Transverse colon (tissue), 4 donors: ENCODE measurements at regions of chr2 and their contacts with region 1.

Region 1: GRCh38 chr2:168118733-168119514 is 128.5 kb downstream of the STK39 start:
- DNase-seq: no peak
- H3K4me3 ChIP-seq: no peak overlapping the region
- H3K27ac ChIP-seq: no peak overlapping the region
- H3K4me1 ChIP-seq: peaks cover 0 to 10% (median 3%) of the 10 kb centered on the region in 4 donors
- H3K27me3 ChIP-seq: no peaks in the 10 kb centered on the region
- CTCF ChIP-seq: peak; percentile 59 to 72 (median 63)
- EP300 ChIP-seq: no peak
- POLR2A ChIP-seq: no peak

Region 2: GRCh38 chr2:166539340-166540162 is 1579.4 kb before region 1 on chr2:
- in situ Hi-C with region 1: loop called in 3 of 4 experiments (anchors 25 kb)
- intact Hi-C with region 1: no loop called
- DNase-seq: no peak
- H3K4me3 ChIP-seq: no peak overlapping the region
- H3K27ac ChIP-seq: no peak overlapping the region
- H3K4me1 ChIP-seq: peaks cover 0 to 5% (median 0%) of the 10 kb centered on the region in 4 donors
- H3K27me3 ChIP-seq: no peaks in the 10 kb centered on the region
- CTCF ChIP-seq: peak; percentile 56 to 73 (median 70)
- EP300 ChIP-seq: no peak
- POLR2A ChIP-seq: no peak

Region 3: DNA sequence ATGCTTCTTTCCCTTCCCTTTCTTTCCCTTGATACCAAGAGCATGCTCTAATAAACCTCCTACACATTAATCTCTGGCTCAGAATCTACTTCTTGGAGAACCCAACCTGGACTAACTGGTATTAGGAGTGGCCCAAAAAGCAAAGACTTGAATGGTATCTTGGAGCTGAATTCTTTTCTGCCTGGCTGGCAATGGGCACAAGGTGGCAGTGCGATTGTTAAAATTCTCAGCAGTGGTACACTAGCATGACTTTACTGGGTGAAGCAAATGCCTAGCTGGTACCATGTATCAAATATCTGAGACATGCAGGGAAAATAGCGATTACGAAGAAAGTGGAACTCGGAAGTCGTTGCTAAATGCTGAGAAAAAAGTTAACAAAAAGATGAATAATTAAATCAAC is 854.5 kb before region 1 on chr2:
- in situ Hi-C with region 1: loop called in 2 of 4 experiments (anchors 25 kb)
- intact Hi-C with region 1: no loop called
- DNase-seq: peak; percentile 36
- H3K4me3 ChIP-seq: no peak overlapping the region
- H3K27ac ChIP-seq: no peak overlapping the region
- H3K4me1 ChIP-seq: no peaks in the 10 kb centered on the region
- H3K27me3 ChIP-seq: no peaks in the 10 kb centered on the region
- CTCF ChIP-seq: peak; percentile 35 to 58 (median 51)
- EP300 ChIP-seq: no peak
- POLR2A ChIP-seq: no peak

Region 4: DNA sequence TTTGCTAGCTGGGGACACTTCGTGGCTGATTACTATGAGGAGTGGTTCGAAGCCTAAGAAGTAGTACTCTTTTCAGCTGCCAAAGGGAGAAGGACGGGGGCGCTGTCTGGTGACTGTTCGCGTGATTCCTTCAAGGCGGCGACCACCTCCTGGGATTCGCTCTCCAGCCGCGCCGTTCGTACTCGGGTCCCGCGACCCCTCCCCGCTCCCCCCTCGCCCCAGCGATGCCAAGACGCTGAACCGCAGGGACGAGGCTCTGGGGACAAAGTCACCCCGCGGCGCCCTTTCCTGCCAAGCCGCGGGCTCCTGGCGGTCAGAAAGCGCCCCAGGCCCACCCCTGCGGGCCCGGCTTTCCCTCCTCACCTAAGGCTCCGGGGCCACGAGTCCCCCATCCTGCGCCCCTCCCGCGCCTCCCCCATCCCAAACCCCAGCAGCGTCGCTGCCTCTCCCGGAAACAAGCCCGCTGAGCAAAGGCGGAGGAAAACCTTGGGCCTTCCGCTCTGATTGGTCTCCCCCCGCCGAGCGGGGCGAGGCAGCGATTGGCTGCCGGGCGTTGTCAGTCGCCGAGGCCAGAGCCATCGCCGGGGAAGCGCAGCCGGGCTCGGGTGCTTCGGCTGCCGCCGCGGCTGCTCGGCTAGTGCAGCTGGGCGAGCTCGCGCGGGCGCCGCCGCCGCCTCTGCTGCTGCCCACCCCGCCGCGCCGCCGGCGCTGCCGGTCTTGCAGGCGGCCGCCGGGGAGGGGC is 826.3 kb before region 1 on chr2:
- in situ Hi-C with region 1: loop called in 1 of 4 experiments (anchors 25 kb)
- intact Hi-C with region 1: no loop called
- DNase-seq: peak; percentile 89
- H3K4me3 ChIP-seq: peak within 1 kb of the TSS; percentile 69 to 84 (median 76)
- H3K27ac ChIP-seq: peak within 1 kb of the TSS; percentile 91 to 92 (median 91)
- H3K4me1 ChIP-seq: peaks cover 0 to 20% (median 2%) of the 10 kb centered on the region in 4 donors
- H3K27me3 ChIP-seq: peaks cover 30% of the 10 kb centered on the region
- CTCF ChIP-seq: peak in 4 of 5 experiments; percentile 22 to 44 (median 38)
- EP300 ChIP-seq: no peak
- POLR2A ChIP-seq: peak; percentile 70

Region 5: DNA sequence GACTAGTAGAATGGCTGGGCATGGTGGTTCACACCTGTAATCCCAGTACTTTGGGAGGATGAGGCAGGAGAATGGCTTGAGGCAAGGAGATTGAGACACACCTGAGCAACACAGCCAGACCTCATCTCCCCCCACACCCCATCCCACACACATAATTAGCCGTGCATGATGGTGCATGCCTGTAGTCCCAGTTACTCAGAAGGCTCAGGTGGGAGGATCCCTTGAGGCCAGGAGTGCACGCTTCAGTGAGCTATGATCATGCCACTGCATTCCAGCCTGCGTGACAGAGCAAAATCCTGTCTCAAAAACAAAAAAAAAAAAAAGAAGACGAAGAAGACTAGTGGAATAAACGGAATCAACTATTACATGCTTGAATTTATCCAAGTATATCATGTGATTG is 21.5 kb before region 1 on chr2:
- in situ Hi-C with region 1: no loop called
- intact Hi-C with region 1: no loop called
- DNase-seq: no peak
- H3K4me3 ChIP-seq: no peak overlapping the region
- H3K27ac ChIP-seq: no peak overlapping the region
- H3K4me1 ChIP-seq: no peaks in the 10 kb centered on the region
- H3K27me3 ChIP-seq: no peaks in the 10 kb centered on the region
- CTCF ChIP-seq: no peak
- EP300 ChIP-seq: no peak
- POLR2A ChIP-seq: no peak